ENCODE measurements at regions of chr11 and their contacts with region 1.

Region 1: GRCh38 chr11:65429724-65430405 is 7.3 kb downstream of the NEAT1 start:
- DNase-seq: peak; percentile 77
- H3K4me3 Mint-ChIP-seq: peak overlapping the region; percentile 100
- H3K27ac Mint-ChIP-seq: peak overlapping the region; percentile 99
- H3K4me1 Mint-ChIP-seq: peaks cover 76% of the 10 kb centered on the region
- H3K27me3 Mint-ChIP-seq: no peaks in the 10 kb centered on the region

Region 2: GRCh38 chr11:65497141-65498041 is 67.5 kb after region 1 on chr11:
- CTCF ChIA-PET with region 1: interaction called, 359 read pairs
- intact Hi-C with region 1: loop called (anchors 1 kb)
- DNase-seq: peak; percentile 99
- H3K4me3 Mint-ChIP-seq: no peak overlapping the region
- H3K27ac Mint-ChIP-seq: no peak overlapping the region
- H3K4me1 Mint-ChIP-seq: peaks cover 37% of the 10 kb centered on the region
- H3K27me3 Mint-ChIP-seq: no peaks in the 10 kb centered on the region